Calu3 (cell line): ENCODE measurements at regions of chr5 and their contacts with region 1.

Region 1: DNA sequence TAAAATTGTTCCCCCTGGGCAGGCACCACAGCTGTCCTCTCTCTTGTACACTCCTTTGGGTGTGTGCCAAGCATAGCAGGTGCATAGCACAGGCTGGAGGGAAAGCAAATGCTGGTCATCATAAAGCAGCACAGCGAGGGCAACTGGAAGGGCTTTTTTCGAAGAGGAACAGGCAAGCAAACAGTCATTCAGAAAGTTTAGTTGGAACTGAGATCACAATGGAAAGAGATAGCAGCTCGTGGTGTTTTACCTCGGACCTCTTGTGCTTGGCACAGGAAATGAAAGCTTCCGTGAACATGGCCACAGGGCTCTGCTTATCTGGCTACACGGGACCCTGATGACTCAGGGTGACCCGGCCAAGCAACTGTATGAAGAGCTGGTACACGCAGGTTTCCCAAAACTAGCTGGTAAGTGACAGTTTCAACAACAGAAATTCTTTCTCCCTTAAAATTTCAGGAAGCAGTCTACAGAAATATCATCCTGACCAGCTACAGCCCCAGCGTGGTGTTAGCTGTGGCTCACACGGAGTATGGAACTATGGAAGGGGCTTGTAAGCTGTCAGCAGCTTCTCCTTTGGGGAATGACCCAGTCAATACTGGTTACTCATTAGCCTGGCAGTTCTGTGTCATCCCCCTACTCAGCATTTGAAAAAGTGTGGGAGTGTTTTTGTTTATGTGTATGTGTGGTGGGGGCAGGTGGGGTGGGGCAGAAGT is 48.1 kb downstream of the POC5 start:
- DNase-seq: peak; percentile 70
- H3K4me3 Mint-ChIP-seq: peak overlapping the region; percentile 66
- H3K27ac Mint-ChIP-seq: peak overlapping the region; percentile 72
- H3K4me1 Mint-ChIP-seq: peaks cover 42% of the 10 kb centered on the region
- H3K27me3 Mint-ChIP-seq: no peaks in the 10 kb centered on the region
- CTCF ChIP-seq: no peak

Region 2: GRCh38 chr5:74865804-74866595 is 803.1 kb before region 1 on chr5 and contains the start of gene FAM169A:
- CTCF ChIA-PET with region 1: no interaction called
- intact Hi-C with region 1: no loop called
- DNase-seq: peak; percentile 76
- H3K4me3 Mint-ChIP-seq: peak within 1 kb of the TSS; percentile 86
- H3K27ac Mint-ChIP-seq: peak within 1 kb of the TSS; percentile 85
- H3K4me1 Mint-ChIP-seq: peaks cover 11% of the 10 kb centered on the region
- H3K27me3 Mint-ChIP-seq: no peaks in the 10 kb centered on the region
- CTCF ChIP-seq: no peak
- total RNA-seq, gene FAM169A: 13.4 and 14.1 TPM in 2 replicates

Region 3: DNA sequence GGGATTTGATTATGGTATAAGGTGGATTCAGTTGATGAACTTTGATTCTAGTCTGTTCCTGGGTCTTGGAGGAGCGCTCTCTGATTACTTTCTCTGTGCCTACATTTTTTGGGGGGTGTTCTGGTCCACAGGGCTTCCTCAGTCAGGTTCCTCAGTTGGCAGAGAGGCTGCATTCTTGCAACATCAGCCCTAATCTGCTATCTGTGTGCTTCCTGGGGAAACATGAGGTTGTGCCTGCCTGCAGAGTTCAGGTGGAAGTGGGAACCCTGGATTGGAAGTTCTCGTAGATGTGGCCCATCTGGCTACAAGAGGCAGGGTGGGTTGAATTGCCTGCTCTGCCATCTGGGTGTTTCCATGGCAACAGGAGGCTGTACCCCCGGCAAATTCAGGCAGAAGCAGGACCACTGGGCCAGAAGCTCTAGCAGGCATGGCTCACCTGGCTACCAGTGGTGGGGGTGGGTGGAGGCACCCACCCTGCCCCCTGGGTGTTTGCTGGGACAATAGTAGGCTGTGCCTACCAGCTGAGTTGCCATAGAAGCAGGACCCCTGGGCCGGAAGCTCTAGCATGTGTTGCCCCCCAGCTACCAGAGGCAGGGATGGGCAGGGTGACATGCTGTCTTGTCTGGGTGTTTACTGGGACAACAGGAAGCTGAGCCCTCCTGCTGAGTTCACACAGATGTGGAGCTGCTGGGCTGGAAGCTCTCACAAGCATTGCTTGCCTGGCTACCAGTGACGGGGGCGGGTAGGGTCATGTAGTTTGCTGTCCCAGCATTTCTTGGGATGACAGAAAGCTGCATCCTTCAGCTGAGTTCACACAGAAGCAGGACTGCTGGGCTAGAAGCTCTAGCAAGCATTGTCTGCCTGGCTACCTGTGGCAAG is 132.7 kb before region 1 on chr5:
- CTCF ChIA-PET with region 1: no interaction called
- intact Hi-C with region 1: no loop called
- DNase-seq: no peak
- H3K4me3 Mint-ChIP-seq: no peak overlapping the region
- H3K27ac Mint-ChIP-seq: no peak overlapping the region
- H3K4me1 Mint-ChIP-seq: peaks cover 13% of the 10 kb centered on the region
- H3K27me3 Mint-ChIP-seq: no peaks in the 10 kb centered on the region
- CTCF ChIP-seq: no peak

Region 4: DNA sequence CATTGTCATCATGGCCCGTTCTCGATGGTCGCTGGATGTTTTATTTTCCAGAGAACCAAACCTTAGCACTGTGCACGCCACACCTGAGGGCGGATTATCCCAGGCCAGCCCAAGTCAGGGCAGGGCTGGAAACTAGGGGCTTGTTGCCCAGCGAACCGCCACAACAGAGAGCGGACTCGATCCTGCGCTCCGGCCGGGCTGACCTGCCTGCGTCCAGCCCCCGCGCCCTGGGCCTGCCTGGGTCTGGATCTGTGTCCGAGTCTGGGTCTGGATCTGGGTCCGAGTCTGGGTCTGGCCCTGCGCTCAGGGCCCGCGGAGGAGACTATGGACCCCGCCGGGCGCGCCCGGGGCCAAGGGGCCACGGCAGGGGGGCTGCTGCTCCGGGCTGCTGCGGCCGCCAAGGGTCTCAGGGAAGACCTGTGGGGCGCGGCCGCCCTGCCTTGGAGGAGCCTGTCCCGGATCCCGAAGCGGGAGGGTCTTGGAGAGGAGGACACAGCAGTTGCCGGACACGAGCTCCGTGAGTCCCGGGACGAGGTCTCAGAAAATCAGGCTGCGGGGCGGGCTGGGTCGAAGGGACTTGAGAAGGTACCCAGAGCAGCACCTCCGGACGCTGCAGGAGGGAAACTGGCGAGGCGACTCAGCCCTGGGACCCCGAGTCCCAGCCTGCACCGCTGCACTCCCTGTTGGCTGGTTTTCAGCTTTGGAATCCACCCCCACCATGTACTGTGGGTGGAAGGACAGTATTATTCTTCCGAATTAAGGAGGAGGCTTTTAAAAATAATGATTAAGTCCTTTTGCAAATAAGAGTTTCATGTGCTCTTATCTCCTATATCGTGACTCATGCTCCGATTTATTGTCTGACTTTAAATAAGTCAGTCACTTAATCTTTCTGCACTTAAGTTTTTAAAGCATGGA is 57.6 kb before region 1 on chr5 and contains the start of gene ANKDD1B:
- CTCF ChIA-PET with region 1: no interaction called
- intact Hi-C with region 1: loop called (anchors 2 kb)
- DNase-seq: peak; percentile 57
- H3K4me3 Mint-ChIP-seq: peak within 1 kb of the TSS; percentile 72
- H3K27ac Mint-ChIP-seq: peak within 1 kb of the TSS; percentile 65
- H3K4me1 Mint-ChIP-seq: no peaks in the 10 kb centered on the region
- H3K27me3 Mint-ChIP-seq: no peaks in the 10 kb centered on the region
- CTCF ChIP-seq: no peak
- total RNA-seq, gene ANKDD1B: 1.3 and 1.6 TPM in 2 replicates